ENCODE measurements at regions of chr3 and their contacts with region 1.

Region 1: GRCh38 chr3:52108302-52109232 is 45.7 kb downstream of the POC1A start:
- DNase-seq: peak; percentile 58
- ATAC-seq: peak; percentile 79

Region 2: DNA sequence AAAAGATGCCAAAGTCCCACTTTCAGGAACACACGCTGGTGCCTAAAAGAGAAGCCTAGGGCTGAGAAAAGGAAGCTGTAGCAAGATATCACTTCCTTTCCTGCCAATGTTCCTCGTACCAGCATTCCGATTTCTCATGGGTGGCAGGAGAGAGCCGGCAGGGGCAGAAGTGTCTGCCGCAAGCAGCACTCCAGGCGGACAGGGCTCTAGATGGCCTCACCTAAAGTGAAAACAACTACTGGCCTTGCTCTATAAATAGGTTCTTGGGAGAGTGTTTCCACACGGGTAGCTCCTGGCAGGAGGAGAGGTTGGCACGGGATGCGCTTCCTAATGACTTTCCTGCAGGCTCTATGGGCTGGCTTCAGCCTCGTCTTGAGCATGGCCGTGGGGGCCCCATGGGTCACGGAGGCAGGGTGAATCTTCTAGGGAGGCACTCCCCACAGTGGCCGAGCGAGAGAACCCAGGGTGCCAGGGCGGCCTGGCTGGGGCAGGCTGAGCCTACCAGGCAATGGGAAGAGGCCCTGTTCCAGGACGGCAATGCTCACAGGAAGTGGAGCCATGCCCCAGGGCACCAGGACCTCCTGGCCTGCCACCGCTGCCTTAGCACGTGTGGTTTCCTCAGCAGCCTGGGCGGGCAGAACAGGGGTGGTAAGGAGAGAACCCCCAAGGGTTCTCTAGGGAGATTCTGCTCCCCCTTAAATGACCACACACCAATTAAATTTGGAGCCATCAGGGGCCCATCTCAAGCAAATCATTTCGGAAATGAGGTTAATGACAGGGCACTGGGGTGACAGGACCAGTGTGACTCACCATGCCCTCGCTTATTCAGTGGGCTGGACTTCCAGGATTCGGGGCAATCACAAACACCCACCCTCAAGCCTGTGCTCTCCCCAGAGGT is 37.6 kb before region 1 on chr3:
- intact Hi-C with region 1: loop called (anchors 5 kb)
- DNase-seq: peak; percentile 74
- ATAC-seq: peak; percentile 87

Measured in Right ventricle myocardium superior (tissue), 1 donor.